ENCODE measurements at regions of chr11 and their contacts with region 1.

Region 1: DNA sequence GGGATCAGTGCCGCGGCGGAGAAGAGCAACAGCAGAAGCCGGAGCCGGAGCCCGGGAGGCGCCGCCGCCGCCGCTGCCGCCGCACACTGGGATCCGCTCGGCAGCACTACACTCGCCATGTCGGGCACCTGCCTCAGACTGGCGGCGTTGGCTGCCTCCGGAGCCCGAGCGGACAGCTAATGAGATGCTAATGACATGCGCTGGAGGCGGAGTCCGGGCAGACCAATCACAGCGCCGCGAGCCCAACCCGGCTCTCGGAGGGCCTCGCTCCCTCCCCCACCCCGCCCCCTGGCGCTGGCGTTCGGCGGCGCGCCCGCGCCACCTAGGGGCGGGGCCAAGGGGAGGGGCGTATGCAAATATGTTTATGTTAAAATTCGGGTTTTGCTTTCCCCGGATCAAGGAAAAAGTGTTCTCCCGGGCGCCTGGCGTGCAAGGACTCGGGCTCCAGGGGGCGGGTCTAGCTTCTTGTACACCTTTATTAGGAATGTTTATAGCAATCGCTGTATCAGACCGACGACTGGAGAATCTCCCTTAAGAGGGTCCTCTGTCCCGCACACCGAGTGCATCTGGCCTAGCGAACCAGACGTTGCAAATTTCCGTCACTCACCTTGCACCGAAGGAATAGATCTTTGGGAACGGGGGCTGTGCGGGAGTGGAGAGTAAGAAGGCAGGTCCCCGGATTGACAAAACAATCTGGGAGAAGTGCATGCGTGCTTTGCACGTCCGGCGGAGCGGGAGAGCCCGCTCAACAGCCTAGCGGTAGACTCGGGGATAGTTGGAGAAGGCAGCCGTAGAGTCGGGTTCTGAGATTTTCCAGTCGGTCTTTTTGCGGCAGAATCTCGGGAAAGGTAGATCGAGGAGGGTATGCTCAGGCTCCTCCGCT is at the start of gene CADM1:
- DNase-seq: peak; percentile 93
- H3K4me3 ChIP-seq: peak within 1 kb of the TSS; percentile 43 to 62 (median 50)
- H3K27ac ChIP-seq: peak within 1 kb of the TSS; percentile 60 to 81 (median 77)
- H3K4me1 ChIP-seq: peaks cover 8 to 25% (median 22%) of the 10 kb centered on the region in 4 donors
- H3K27me3 ChIP-seq: peaks cover 83% of the 10 kb centered on the region
- CTCF ChIP-seq: peak; percentile 51 to 78 (median 71)
- EP300 ChIP-seq: no peak
- POLR2A ChIP-seq: peak; percentile 64
- total RNA-seq, gene CADM1: 2.8 to 6.4 (median 3.7) TPM

Region 2: DNA sequence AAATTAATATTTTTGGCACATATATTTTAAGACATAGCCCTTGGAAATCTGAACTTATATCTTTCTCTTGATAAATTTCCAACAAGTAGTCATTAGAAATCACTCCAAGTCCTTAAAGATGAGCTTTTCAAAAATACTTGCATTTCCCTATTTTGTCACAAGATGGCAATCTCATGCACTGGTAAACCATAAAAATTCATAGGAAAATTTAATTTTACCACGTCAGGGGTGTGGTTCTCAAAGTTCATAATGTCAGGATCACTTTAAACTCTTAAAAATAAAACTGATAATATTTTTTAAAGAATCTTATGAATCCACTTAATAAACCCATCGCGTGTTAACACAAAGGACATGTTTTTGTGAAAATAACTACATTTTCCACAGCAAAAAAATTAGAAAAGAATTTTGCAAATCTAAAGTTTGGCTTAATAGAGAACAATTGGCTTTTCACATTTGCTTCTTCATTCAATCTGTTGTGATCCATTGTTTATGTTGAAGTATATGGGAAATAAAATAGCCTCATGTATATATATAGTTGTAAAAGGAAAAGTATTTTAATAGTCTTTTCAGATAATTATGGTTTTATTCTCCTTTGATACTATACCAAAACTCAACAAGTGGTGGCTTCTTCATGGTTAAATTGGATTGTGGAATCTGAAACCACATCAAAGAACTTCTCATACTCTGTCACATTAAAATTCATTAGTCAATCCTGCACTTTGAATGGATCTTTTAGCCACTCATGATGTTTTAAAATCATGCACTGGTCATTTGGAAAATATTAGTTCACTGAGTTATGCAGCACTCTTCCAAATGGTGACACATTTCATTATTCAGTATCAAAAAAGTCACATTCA is 169.4 kb before region 1 on chr11:
- in situ Hi-C with region 1: no loop called
- intact Hi-C with region 1: loop called (anchors 5 kb)
- DNase-seq: no peak
- H3K4me3 ChIP-seq: no peak overlapping the region
- H3K27ac ChIP-seq: no peak overlapping the region
- H3K4me1 ChIP-seq: no peaks in the 10 kb centered on the region
- H3K27me3 ChIP-seq: peaks cover 17% of the 10 kb centered on the region
- CTCF ChIP-seq: peak; percentile 57 to 79 (median 73)
- EP300 ChIP-seq: no peak
- POLR2A ChIP-seq: no peak

Region 3: GRCh38 chr11:115469361-115469760 is 35.2 kb before region 1 on chr11:
- in situ Hi-C with region 1: no loop called
- intact Hi-C with region 1: loop called (anchors 2 kb)
- DNase-seq: no peak
- H3K4me3 ChIP-seq: no peak overlapping the region
- H3K27ac ChIP-seq: no peak overlapping the region
- H3K4me1 ChIP-seq: no peaks in the 10 kb centered on the region
- H3K27me3 ChIP-seq: no peaks in the 10 kb centered on the region
- CTCF ChIP-seq: no peak
- EP300 ChIP-seq: no peak
- POLR2A ChIP-seq: no peak

Region 4: DNA sequence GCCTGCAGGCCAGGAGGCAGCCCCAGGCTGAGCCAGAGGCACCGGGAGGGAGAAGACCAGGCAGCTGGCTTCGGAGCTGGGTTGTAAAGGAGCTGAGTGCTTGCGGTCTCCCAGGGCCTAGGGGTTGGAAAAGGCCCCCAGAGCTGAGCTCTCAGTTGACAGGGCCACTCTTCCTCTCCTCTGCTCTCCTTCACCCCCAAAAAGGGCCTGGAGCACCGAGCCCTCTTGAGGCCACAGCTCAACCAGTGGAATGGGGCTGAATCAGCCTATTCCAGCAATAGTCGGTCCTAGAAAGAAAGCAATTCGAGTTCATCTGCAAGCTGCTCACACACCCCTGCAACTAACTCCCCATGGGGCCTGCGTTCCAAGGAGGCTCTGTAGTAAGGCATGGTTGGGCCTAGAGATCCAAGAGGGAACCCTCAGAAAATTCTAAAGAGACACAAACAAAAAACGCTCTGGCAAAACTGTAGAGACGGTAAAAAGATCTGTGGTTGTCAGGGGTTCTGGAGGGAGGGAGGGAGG is 1063.3 kb after region 1 on chr11:
- in situ Hi-C with region 1: no loop called
- intact Hi-C with region 1: no loop called
- DNase-seq: no peak
- H3K4me3 ChIP-seq: no peak overlapping the region
- H3K27ac ChIP-seq: no peak overlapping the region
- H3K4me1 ChIP-seq: no peaks in the 10 kb centered on the region
- H3K27me3 ChIP-seq: no peaks in the 10 kb centered on the region
- CTCF ChIP-seq: no peak
- EP300 ChIP-seq: no peak
- POLR2A ChIP-seq: no peak

Measured in transverse colon (tissue), 4 donors.